CD4-positive, alpha-beta memory T cell (primary cell): ENCODE measurements at regions of chr3 and their contacts with region 1.

Region 1: DNA sequence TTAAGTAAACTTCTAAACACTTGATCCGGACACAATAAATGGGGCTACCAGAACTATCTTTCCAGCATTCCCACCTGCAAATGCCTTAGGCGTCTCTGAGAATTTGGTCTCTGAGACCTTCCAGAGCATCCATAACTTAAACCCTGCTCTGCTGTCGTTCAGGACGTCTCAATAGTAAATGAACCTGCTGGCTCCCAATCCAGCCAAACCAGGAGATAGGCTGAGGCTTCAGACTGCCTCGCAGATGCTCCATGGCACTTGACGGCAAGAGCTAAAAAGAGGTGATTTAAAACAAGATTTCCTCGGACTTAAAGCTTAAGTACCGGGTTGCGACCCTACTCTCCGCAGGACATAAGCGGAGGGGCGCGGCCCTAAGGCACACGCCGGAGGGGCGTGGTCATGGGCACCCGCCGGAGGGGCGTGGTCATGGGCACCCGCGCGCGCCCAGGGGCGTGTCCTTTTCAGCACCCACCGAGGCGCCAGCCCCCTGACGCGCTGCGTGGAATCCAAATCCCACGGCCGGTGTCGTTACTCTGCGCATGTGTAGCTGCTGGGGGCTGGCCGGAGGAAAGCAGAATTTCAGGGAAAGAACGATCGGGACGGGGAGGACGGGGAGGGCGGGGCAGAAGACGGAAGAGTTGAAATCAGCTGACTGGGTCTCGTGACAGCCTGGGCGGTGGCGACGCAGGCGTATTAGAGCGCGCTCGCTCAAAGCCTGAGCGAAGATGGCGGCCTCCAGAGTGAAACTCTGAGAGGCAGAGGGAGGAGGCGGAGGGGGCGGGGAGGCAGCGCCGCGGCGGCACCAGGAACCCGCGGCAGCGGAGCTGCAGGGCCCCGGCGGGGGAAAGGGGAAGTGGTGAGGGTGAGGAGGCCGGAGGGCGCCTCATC is at the start of gene DNAJC13:
- DNase-seq: peak; percentile 91 to 95 (median 93)
- H3K4me3 ChIP-seq: peak within 1 kb of the TSS; percentile 84 to 89
- H3K4me3 Mint-ChIP-seq: peak within 1 kb of the TSS; percentile 96 to 100 (median 99)
- H3K27ac ChIP-seq: peak within 1 kb of the TSS; percentile 82
- H3K27ac Mint-ChIP-seq: peak within 1 kb of the TSS; percentile 95 to 99 (median 98)
- H3K4me1 ChIP-seq: peaks cover 23% of the 10 kb centered on the region
- H3K4me1 Mint-ChIP-seq: peaks cover 20 to 38% (median 26%) of the 10 kb centered on the region in 4 donors
- H3K27me3 ChIP-seq: no peaks in the 10 kb centered on the region
- H3K27me3 Mint-ChIP-seq: no peaks in the 10 kb centered on the region
- total RNA-seq, gene DNAJC13: 43.1 to 43.5 TPM

Region 2: DNA sequence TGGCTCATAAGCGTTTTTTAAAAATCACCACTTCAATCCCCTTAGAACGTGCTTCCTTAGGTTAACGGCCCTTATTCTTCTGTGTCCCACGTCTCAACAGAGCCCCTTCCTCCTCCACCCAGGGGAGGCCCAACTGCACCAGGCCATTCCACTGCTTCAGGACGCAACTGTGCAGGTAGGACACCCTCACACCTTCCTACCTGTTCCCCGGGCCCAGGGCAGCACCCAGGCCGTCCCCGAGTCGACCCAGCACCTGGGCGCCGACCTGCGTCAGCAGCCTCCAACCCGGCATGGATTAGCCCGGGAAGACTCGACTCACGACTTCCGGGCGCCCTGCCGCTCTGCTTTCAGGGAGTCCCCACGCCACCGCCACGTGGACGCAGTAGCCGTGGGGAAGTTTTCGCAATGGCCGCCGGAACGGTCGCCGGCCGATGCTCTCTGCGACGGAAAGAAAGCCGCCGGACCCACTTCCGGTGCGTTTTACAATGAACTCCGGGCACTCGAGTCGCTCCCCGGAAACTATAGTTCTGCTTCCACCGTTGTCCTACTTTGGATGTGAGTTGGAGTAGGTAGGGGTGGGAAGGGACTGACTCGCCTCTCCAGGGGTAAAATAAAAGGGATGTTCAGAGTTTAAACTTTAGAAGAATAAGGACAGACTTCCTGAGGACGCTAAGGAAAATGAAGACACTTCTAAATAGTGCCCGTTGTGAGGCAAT is 914.4 kb before region 1 on chr3 and contains the start of gene MRPL3:
- CTCF ChIA-PET with region 1: no interaction called
- POLR2A ChIA-PET with region 1: no interaction called
- intact Hi-C with region 1: loop called (anchors 2 kb)
- DNase-seq: peak; percentile 79 to 85 (median 81)
- H3K4me3 ChIP-seq: peak within 1 kb of the TSS; percentile 74 to 98
- H3K4me3 Mint-ChIP-seq: peak within 1 kb of the TSS; percentile 91 to 100 (median 98)
- H3K27ac ChIP-seq: peak within 1 kb of the TSS; percentile 75
- H3K27ac Mint-ChIP-seq: peak within 1 kb of the TSS; percentile 92 to 97 (median 95)
- H3K4me1 ChIP-seq: peaks cover 27% of the 10 kb centered on the region
- H3K4me1 Mint-ChIP-seq: peaks cover 25 to 47% (median 38%) of the 10 kb centered on the region in 4 donors
- H3K27me3 ChIP-seq: no peaks in the 10 kb centered on the region
- H3K27me3 Mint-ChIP-seq: no peaks in the 10 kb centered on the region
- total RNA-seq, gene MRPL3: 45.8 to 48.1 TPM

Region 3: GRCh38 chr3:132174500-132174899 is 242.6 kb before region 1 on chr3:
- CTCF ChIA-PET with region 1: no interaction called
- POLR2A ChIA-PET with region 1: no interaction called
- intact Hi-C with region 1: no loop called
- DNase-seq: no peak
- H3K4me3 ChIP-seq: no peak overlapping the region
- H3K4me3 Mint-ChIP-seq: no peak overlapping the region
- H3K27ac ChIP-seq: no peak overlapping the region
- H3K27ac Mint-ChIP-seq: no peak overlapping the region
- H3K4me1 ChIP-seq: no peaks in the 10 kb centered on the region
- H3K4me1 Mint-ChIP-seq: no peaks in the 10 kb centered on the region
- H3K27me3 ChIP-seq: no peaks in the 10 kb centered on the region
- H3K27me3 Mint-ChIP-seq: peaks cover 0 to 5% of the 10 kb centered on the region in 2 donors

Region 4: DNA sequence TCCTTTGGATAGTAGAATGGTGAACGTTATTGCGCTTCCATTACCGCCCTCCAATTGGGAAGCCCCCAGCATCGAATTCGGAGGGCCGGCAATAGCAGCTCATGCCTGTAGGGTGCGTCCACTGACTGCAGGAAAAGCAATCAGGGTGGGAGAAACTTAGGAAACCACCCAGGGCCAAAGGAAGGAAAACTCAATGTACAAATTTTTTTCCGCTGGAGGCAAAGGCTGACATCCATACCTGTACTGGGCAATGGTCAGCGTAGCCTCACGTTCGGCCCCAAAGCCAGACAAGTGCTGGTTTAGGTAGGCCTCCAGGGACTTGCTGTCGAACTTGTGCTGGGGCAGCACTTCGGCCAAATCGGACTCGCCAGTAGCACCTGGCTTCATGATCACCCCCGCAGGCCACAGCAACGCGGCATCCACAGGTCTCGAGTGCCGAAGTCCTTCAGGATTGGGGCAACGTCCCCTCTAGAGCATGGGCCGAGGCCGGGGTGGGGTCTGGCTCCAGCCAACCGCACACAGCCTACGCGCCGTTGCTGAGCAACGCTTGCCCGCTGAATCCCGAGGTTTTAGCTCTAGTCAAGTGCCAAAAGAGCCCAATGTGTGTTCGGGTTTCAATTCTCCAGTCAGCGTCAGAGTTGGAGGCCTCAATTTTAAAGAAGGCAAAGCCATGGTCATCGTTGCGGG is 242.5 kb after region 1 on chr3 and contains the start of gene ACAD11:
- CTCF ChIA-PET with region 1: no interaction called
- POLR2A ChIA-PET with region 1: interaction called, 3 read pairs
- intact Hi-C with region 1: loop called (anchors 1 kb)
- DNase-seq: peak; percentile 11 to 48 (median 13)
- H3K4me3 ChIP-seq: peak within 1 kb of the TSS; percentile 78 to 99
- H3K4me3 Mint-ChIP-seq: peak within 1 kb of the TSS; percentile 96 to 99 (median 98)
- H3K27ac ChIP-seq: peak within 1 kb of the TSS; percentile 83
- H3K27ac Mint-ChIP-seq: peak within 1 kb of the TSS; percentile 95 to 98 (median 97)
- H3K4me1 ChIP-seq: peaks cover 53% of the 10 kb centered on the region
- H3K4me1 Mint-ChIP-seq: peaks cover 37 to 71% (median 48%) of the 10 kb centered on the region in 4 donors
- H3K27me3 ChIP-seq: no peaks in the 10 kb centered on the region
- H3K27me3 Mint-ChIP-seq: no peaks in the 10 kb centered on the region
- total RNA-seq, gene ACAD11: 21.6 to 26.9 TPM